Left ventricle myocardium superior (tissue), 1 donor: ENCODE measurements at regions of chr7 and their contacts with region 1.

Region 1: DNA sequence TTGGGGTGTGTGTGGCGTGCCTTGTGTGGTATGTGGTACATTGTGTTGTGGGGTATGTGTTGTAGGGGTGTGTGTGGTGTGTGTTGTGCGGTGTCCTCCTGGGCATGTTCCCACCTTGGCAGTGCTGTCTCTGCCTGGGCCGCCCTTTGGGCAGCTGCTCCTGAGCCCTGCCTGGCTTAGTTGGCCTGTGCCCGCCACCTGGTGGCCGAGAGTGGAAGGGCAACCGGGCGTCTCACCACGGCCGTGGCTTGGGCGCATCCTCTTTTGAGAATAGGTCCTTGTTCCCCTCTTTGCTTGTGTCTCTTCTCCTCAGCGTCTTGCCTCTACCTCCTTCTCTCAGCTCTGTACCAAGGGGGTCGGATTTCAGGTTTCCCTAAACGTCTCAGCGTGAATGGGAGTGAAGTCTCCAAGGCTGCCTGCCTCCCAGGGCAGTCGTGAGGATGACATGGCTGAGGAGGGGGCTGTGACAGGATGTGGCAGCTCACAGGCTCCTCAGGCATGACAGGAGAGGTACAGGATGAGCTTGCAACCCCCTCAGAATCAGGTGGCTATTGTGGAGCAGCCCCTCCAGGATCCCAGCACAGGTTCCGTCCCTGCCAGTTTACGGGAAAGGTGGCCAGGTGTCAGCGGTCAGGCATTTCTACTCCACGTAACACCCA is 98.4 kb upstream of the PODXL start:
- DNase-seq: peak; percentile 94
- ATAC-seq: peak; percentile 86

Region 2: GRCh38 chr7:131513245-131514061 is 141.3 kb before region 1 on chr7:
- intact Hi-C with region 1: loop called (anchors 5 kb)
- DNase-seq: peak; percentile 89
- ATAC-seq: peak; percentile 92

Region 3: GRCh38 chr7:131556052-131556908 is 98.5 kb before region 1 on chr7 and contains the start of gene PODXL:
- intact Hi-C with region 1: loop called (anchors 10 kb)
- DNase-seq: peak; percentile 91
- ATAC-seq: peak; percentile 87
- total RNA-seq, gene PODXL: 61.2 TPM